ENCODE measurements at regions of chr14 and their contacts with region 1.

Region 1: DNA sequence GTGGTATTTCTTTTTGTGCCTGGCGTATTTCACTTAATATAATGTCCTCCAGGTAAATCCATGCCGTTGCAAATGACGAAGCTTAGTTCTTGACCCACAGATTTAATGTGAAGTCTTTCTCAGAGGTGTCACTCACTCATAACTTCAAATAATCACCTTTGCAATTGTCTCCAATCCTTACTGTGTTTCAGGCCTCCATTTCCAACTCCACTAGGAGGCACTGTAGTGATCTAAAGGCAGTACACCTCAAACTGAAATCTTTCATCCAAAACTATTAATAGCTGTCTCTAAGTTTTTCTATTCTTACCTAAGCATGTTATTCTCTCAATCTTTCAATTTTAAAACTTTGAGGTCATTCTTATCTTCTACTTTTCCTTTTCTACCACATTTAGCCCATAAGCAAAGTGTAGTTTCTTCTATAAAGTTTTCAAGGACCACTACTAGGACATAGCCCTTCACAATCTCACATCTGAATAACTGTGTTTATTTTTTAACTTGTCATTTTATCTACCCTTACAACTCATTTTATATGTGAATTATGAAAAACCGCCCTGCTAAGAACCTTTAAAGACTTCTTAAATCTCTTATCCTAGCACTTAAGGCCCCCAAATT is 25.5 kb upstream of the FBXO34 start:
- DNase-seq: peak; percentile 51
- H3K4me3 Mint-ChIP-seq: no peak overlapping the region
- H3K27ac Mint-ChIP-seq: no peak overlapping the region
- H3K4me1 Mint-ChIP-seq: no peaks in the 10 kb centered on the region
- H3K27me3 Mint-ChIP-seq: peaks cover 28% of the 10 kb centered on the region

Region 2: DNA sequence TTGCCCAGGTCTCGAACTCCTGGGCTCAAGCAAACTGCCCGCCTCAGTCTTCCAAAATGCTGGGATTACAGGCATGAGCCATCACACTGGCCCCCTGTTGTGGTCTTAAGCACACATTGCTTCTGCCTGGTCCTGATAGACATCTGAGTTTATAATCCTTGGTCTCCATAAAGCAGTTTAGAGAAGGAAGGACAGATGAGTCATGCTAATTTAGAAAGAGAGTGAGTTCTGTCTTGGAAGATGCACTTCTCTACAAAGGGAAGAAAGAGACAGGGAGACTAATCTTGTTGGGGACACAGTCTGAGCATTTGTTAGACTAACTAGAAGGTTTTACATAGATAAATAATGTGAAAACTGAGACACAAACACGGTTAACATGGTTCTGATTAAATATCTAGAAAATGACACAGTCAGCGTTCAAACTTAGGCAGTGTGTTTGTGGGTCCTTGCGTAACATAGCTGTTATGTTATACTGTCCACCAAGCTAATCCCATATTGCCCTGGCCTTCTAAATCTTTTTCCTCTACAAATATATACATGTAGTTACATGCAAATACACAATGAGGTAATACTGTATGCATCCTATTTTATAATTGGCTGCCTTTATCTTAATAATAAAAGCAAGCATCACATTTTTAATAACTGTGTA is 647.8 kb before region 1 on chr14:
- CTCF ChIA-PET with region 1: no interaction called
- POLR2A ChIA-PET with region 1: no interaction called
- DNase-seq: no peak
- H3K4me3 Mint-ChIP-seq: no peak overlapping the region
- H3K27ac Mint-ChIP-seq: no peak overlapping the region
- H3K4me1 Mint-ChIP-seq: peaks cover 10% of the 10 kb centered on the region
- H3K27me3 Mint-ChIP-seq: peaks cover 8% of the 10 kb centered on the region

Region 3: DNA sequence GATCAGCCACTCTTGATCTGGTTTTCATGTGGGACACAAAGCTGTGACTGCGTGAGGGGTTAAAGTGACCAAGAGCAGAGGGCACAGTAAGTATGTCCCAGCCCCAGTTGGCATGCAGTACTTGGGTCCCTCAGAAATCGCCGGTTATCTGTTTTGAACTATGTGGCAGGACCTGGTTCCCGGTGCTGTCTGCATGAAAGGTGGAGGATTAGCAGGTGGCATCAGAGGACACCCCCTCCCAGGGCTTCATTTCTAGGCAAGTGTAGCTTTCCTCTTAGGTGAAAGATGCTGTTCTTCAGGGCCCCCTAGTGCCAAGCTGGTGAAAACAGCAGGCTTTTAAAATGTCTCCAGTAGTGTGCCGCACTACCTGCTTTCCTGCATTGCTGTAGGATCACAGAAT is 108.7 kb after region 1 on chr14:
- CTCF ChIA-PET with region 1: interaction called, 11 read pairs
- POLR2A ChIA-PET with region 1: no interaction called
- DNase-seq: peak; percentile 74
- H3K4me3 Mint-ChIP-seq: no peak overlapping the region
- H3K27ac Mint-ChIP-seq: peak overlapping the region; percentile 84
- H3K4me1 Mint-ChIP-seq: peaks cover 30% of the 10 kb centered on the region
- H3K27me3 Mint-ChIP-seq: no peaks in the 10 kb centered on the region

Measured in activated CD4-positive, alpha-beta T cell treated with anti-CD3 and anti-CD28 coated beads, Interleukin-2, amount 10 ng/mL, durations not matched to agents 7 days and 5 days (primary cell).